ENCODE measurements at regions of chr15 and their contacts with region 1.

Region 1: GRCh38 chr15:84023636-84024035 is 211.9 kb upstream of the GOLGA6L4 start:
- DNase-seq: peak; percentile 75
- H3K4me3 ChIP-seq: no peak overlapping the region
- H3K27ac ChIP-seq: no peak overlapping the region
- H3K4me1 ChIP-seq: no peaks in the 10 kb centered on the region
- H3K27me3 ChIP-seq: peaks cover 3% of the 10 kb centered on the region
- CTCF ChIP-seq: peak; percentile 75

Region 2: DNA sequence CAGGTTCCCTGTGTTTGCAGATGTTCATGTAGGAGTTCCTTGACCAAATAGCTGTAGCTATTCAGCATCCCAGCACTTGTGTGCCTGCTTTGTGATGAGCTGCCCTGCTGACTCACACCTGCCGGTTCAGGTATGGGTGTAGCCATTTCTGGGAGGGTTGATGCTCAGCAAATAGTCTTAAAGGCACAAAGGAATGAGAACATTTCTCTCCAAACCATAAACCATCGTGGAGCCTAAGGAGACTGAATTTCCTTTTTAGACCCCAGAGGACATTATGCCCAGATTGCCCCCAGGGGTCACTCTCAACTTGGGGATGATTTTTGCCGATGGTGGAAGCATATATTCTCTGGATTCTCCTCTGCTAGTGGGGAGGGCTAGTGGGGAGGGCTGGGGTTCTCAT is 289.1 kb before region 1 on chr15:
- CTCF ChIA-PET with region 1: no interaction called
- POLR2A ChIA-PET with region 1: no interaction called
- intact Hi-C with region 1: loop called (anchors 10 kb)
- DNase-seq: peak; percentile 21
- H3K4me3 ChIP-seq: no peak overlapping the region
- H3K27ac ChIP-seq: no peak overlapping the region
- H3K4me1 ChIP-seq: peaks cover 8% of the 10 kb centered on the region
- H3K27me3 ChIP-seq: no peaks in the 10 kb centered on the region
- CTCF ChIP-seq: 0 out of 2 replicates have a peak, but pooled peaks have one; percentile 18